CD4-positive, alpha-beta memory T cell (primary cell): ENCODE measurements at regions of chr12 and their contacts with region 1.

Region 1: DNA sequence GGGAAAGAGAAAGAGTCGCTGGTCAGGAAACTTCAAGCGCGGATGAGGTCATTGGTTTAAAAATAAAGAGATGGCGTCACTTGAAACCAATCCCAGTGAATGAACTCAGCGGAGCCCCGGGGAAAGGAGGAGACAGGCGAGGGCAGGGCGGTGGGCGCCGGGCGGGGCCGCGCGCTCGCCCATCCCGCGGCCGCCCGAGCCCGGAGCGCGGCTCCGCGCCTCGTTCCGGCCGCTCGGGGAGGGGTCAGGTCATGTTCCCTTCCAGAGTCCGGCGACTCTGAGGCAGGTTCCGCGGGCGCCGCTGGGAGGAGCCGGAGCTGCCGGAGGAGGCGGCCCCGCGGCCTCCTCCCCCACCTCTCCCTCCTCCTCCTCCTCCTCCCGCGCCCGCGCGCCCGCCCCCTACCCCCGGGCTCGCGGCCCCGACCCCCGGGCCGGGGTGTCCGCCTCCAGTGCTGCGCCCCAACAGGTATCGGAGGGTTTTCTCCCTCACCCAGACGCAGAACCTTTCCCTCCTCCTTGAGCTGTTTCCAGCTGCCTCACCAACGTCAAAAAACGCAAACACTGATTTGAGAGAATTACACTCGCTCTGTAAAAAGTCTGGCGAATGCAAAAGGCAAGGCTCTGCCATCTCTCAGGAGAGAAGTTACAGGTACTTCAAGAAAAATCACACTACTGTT is at the start of gene DUSP16:
- DNase-seq: peak; percentile 90 to 93 (median 91)
- H3K4me3 ChIP-seq: peak within 1 kb of the TSS; percentile 73 to 80
- H3K4me3 Mint-ChIP-seq: peak within 1 kb of the TSS; percentile 92 to 95 (median 92)
- H3K27ac ChIP-seq: peak within 1 kb of the TSS; percentile 99
- H3K27ac Mint-ChIP-seq: peak within 1 kb of the TSS; percentile 95 to 99 (median 99)
- H3K4me1 ChIP-seq: peaks cover 43% of the 10 kb centered on the region
- H3K4me1 Mint-ChIP-seq: peaks cover 25 to 51% (median 37%) of the 10 kb centered on the region in 4 donors
- H3K27me3 ChIP-seq: no peaks in the 10 kb centered on the region
- H3K27me3 Mint-ChIP-seq: no peaks in the 10 kb centered on the region
- total RNA-seq, gene DUSP16: 122 to 125 TPM

Region 2: DNA sequence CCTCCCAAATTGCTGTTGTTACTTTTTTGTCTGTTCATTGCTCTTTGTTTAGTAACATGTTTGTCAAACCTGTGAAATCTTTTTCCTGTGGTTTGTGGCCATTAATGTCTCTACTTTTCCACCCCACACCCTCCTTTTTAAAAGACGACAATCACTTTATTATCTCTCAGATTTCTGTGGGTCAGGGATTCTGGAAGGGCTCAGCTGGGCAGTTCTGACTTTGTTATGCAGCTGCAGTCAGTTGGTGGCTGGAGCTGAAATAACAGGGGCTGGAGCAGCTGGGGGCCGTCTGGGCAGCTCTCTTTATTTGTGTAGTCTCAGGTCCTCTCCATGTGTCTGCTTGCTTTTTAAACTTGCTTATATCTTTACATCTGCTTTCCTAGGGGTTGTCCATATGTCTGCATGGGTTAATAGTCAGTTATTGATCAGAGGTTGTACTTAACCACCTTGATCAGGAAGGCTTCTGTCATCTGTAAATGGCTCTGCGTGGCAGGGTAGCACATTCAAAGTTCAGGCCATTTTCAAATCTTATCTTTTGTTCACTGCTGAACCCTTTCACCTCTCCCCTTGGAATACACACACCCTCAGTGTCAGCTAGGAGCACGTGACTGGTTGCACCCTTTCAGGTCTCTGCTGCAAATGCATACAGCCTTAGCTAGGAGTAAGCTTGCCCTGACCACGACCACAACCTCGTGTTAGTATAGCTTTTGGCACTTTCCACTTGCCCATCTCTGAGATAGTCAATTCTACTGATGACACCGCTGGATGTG is 178.0 kb before region 1 on chr12:
- CTCF ChIA-PET with region 1: interaction called, 88 read pairs
- POLR2A ChIA-PET with region 1: interaction called, 50 read pairs
- intact Hi-C with region 1: no loop called
- DNase-seq: peak in 4 of 5 donors; percentile 46 to 48 (median 47)
- H3K4me3 ChIP-seq: peak overlapping the region in 1 of 2 donors; percentile 9
- H3K4me3 Mint-ChIP-seq: peak overlapping the region; percentile 59 to 85 (median 74)
- H3K27ac ChIP-seq: peak overlapping the region; percentile 50
- H3K27ac Mint-ChIP-seq: peak overlapping the region; percentile 86 to 99 (median 96)
- H3K4me1 ChIP-seq: peaks cover 87% of the 10 kb centered on the region
- H3K4me1 Mint-ChIP-seq: peaks cover 46 to 87% (median 68%) of the 10 kb centered on the region in 4 donors
- H3K27me3 ChIP-seq: no peaks in the 10 kb centered on the region
- H3K27me3 Mint-ChIP-seq: no peaks in the 10 kb centered on the region

Region 3: DNA sequence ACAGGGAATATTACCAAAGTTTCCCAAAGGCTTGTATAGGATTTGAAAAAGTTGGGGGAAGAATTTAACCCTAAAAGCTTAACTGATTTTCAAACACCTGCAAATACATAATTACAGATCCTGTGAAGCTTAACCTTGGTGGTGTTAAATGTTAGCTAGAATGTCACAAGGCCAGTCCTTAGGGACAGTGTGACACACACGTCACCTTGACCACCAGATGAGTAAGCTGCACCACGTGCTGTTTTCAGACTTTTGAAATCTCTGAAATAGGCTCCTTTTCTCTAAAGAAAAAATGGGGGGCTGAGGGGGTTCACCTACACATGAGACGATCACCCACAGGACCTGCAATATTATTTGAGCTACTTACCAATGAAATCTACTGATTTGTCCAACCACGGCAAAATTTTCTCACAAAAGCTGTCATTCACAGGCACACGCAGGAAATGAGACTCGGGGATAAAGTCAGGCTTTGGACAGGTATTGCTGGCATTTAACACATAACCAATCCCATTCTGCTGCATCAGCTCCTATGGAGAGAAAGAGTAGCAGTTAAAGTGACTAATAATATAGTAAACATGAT is 76.0 kb before region 1 on chr12:
- CTCF ChIA-PET with region 1: interaction called, 6 read pairs
- POLR2A ChIA-PET with region 1: interaction called, 75 read pairs
- intact Hi-C with region 1: loop called (anchors 1 kb)
- DNase-seq: no peak
- H3K4me3 ChIP-seq: no peak overlapping the region
- H3K4me3 Mint-ChIP-seq: peak overlapping the region in 6 of 8 donors; percentile 14 to 65 (median 28)
- H3K27ac ChIP-seq: peak overlapping the region; percentile 40
- H3K27ac Mint-ChIP-seq: peak overlapping the region; percentile 84 to 99 (median 92)
- H3K4me1 ChIP-seq: peaks cover 78% of the 10 kb centered on the region
- H3K4me1 Mint-ChIP-seq: peaks cover 36 to 70% (median 56%) of the 10 kb centered on the region in 4 donors
- H3K27me3 ChIP-seq: no peaks in the 10 kb centered on the region
- H3K27me3 Mint-ChIP-seq: no peaks in the 10 kb centered on the region

Region 4: DNA sequence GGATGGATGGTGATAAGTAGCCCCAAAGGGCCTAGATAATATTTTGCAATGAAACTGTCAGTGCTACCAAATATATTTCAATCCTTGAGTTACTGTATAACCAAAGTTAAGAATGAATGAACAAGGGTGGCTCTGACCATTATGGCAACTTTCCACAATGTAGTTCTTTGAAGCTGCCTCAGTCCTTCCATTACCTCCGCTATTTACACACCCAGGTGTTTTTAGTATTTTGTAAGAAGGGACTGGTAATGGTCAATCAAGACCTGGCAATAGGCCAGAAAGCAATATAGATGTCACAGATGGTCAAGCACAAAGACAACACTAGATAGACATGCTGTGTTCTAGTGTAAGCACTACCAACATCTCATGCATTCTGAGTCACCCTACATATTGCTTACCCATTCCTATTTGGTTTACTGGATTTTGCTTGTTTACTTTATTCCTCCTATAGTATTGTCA is 16.4 kb before region 1 on chr12:
- CTCF ChIA-PET with region 1: interaction called, 4 read pairs
- POLR2A ChIA-PET with region 1: interaction called, 12 read pairs
- intact Hi-C with region 1: loop called (anchors 2 kb)
- DNase-seq: no peak
- H3K4me3 ChIP-seq: no peak overlapping the region
- H3K4me3 Mint-ChIP-seq: no peak overlapping the region
- H3K27ac ChIP-seq: no peak overlapping the region
- H3K27ac Mint-ChIP-seq: peak overlapping the region in 2 of 7 donors; percentile 22 to 51
- H3K4me1 ChIP-seq: peaks cover 12% of the 10 kb centered on the region
- H3K4me1 Mint-ChIP-seq: peaks cover 22 to 58% (median 40%) of the 10 kb centered on the region in 4 donors
- H3K27me3 ChIP-seq: no peaks in the 10 kb centered on the region
- H3K27me3 Mint-ChIP-seq: no peaks in the 10 kb centered on the region

Region 5: GRCh38 chr12:12696562-12697383 is 134.1 kb after region 1 on chr12:
- CTCF ChIA-PET with region 1: interaction called, 3 read pairs
- POLR2A ChIA-PET with region 1: interaction called, 9 read pairs
- intact Hi-C with region 1: loop called (anchors 1 kb)
- DNase-seq: peak; percentile 93 to 96 (median 95)
- H3K4me3 ChIP-seq: peak overlapping the region; percentile 37 to 74
- H3K4me3 Mint-ChIP-seq: peak overlapping the region; percentile 86 to 97 (median 94)
- H3K27ac ChIP-seq: peak overlapping the region; percentile 87
- H3K27ac Mint-ChIP-seq: peak overlapping the region; percentile 98 to 100 (median 100)
- H3K4me1 ChIP-seq: peaks cover 24% of the 10 kb centered on the region
- H3K4me1 Mint-ChIP-seq: peaks cover 16 to 41% (median 30%) of the 10 kb centered on the region in 4 donors
- H3K27me3 ChIP-seq: no peaks in the 10 kb centered on the region
- H3K27me3 Mint-ChIP-seq: no peaks in the 10 kb centered on the region

Region 6: GRCh38 chr12:12736759-12737676 is 174.3 kb after region 1 on chr12:
- CTCF ChIA-PET with region 1: interaction called, 28 read pairs
- POLR2A ChIA-PET with region 1: interaction called, 26 read pairs
- intact Hi-C with region 1: loop called (anchors 1 kb)
- DNase-seq: peak; percentile 61 to 70 (median 64)
- H3K4me3 ChIP-seq: peak overlapping the region in 1 of 2 donors; percentile 46
- H3K4me3 Mint-ChIP-seq: peak overlapping the region; percentile 67 to 88 (median 76)
- H3K27ac ChIP-seq: peak overlapping the region; percentile 76
- H3K27ac Mint-ChIP-seq: peak overlapping the region; percentile 88 to 93 (median 93)
- H3K4me1 ChIP-seq: peaks cover 55% of the 10 kb centered on the region
- H3K4me1 Mint-ChIP-seq: peaks cover 24 to 59% (median 41%) of the 10 kb centered on the region in 4 donors
- H3K27me3 ChIP-seq: no peaks in the 10 kb centered on the region
- H3K27me3 Mint-ChIP-seq: no peaks in the 10 kb centered on the region